K562 (cell line): ENCODE measurements at regions of chr1 and their contacts with region 1.

Region 1: DNA sequence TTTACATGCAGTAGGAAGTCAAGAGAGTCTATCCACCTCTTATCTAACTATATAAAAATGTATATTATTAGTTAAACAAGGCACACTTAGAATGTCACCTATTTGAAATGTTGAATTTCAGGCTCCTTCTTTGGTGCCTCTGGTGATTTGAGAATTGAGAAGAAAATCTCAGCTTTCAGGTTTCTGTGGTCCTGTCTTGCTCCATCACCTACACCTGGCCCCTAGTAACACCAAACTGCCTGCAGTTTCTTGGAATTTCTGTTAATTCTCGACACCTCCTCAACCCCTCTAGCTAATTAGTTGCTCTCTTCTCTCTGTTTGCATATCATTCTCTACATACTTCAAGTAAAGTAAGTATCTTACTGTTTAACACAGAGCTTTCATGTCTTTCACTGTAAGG is 54.9 kb upstream of the WNT2B start:
- DNase-seq: no peak
- ATAC-seq: no peak
- H3K4me3 ChIP-seq: no peak overlapping the region
- H3K27ac ChIP-seq: no peak overlapping the region
- H3K4me1 ChIP-seq: no peaks in the 10 kb centered on the region
- H3K27me3 ChIP-seq: peaks cover 8 to 27% of the 10 kb centered on the region in 2 experiments
- CTCF ChIP-seq: no peak
- EP300 ChIP-seq: no peak
- POLR2A ChIP-seq: no peak
- RAD21 ChIP-seq: no peak

Region 2: GRCh38 chr1:111948209-111949171 is 505.4 kb before region 1 on chr1:
- CTCF ChIA-PET with region 1: no interaction called
- POLR2A ChIA-PET with region 1: no interaction called
- in situ Hi-C with region 1: no loop called
- intact Hi-C with region 1: no loop called
- DNase-seq: no peak
- ATAC-seq: no peak
- H3K4me3 ChIP-seq: no peak overlapping the region
- H3K27ac ChIP-seq: no peak overlapping the region
- H3K4me1 ChIP-seq: no peaks in the 10 kb centered on the region
- H3K27me3 ChIP-seq: peaks cover 4 to 30% of the 10 kb centered on the region in 2 experiments; a peak in 4 of 5 replicates
- CTCF ChIP-seq: no peak
- EP300 ChIP-seq: no peak
- POLR2A ChIP-seq: no peak
- RAD21 ChIP-seq: no peak

Region 3: GRCh38 chr1:112466078-112466660 is 12.3 kb after region 1 on chr1:
- CTCF ChIA-PET with region 1: no interaction called
- POLR2A ChIA-PET with region 1: interaction called, 11 read pairs
- in situ Hi-C with region 1: no loop called
- intact Hi-C with region 1: no loop called
- DNase-seq: peak; percentile 85 to 94 (median 92)
- ATAC-seq: peak; percentile 90
- H3K4me3 ChIP-seq: no peak overlapping the region
- H3K27ac ChIP-seq: no peak overlapping the region
- H3K4me1 ChIP-seq: peaks cover 14 to 21% of the 10 kb centered on the region in 2 experiments
- H3K27me3 ChIP-seq: peaks cover 7 to 8% of the 10 kb centered on the region in 2 experiments
- CTCF ChIP-seq: peak; percentile 93 to 97 (median 94)
- EP300 ChIP-seq: 0 out of 2 replicates have a peak, but pooled peaks have one; percentile 8
- POLR2A ChIP-seq: no peak
- RAD21 ChIP-seq: peak; percentile 95 to 96